SK-N-SH (cell line): ENCODE measurements at regions of chr5 and their contacts with region 1.

Region 1: DNA sequence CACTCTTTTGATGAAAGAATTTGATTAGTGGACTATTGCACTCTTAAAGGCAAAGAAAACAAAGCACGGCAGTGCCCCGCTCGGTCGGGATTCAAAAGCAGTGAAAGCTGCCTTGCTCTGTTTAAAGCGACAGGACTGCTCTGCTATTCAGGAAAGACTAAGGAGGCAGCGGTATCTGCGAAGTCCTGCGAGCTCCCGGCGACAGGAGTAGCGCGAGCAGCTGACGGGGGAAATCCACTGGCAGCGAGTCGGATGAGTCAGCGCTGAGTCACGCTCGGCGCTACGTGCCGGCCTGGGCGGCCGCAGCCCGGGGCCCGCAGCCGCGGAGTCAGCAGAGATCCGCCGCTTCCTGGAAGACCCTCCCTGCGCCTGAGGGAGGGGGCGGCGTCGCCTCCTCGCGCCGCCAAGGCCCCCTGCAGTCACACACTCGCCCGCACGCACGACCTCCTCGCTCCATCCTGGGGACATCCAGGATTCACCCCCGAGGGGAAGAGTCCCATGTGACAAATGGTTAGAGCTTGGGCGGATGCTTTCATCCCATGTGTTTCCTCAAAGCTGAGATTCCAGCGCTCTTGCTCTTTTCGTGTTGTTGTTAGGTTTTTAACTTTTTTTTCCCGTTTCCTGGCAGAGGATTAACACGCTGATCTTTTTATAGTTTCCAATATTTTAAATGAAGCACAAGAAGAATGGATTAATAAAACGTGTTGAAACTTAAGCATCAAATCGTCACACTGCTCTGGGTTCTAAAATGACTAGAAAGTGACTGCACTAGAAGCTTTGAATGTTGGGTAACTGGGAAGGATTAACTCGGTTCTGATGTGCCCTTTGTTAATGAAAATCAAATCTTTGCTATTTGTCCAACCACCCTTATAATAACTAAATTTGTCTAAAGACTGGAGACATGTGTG is 102.5 kb downstream of the ARRDC3 start:
- DNase-seq: peak; percentile 91
- H3K4me3 ChIP-seq: peak overlapping the region; percentile 50 to 58
- H3K27ac ChIP-seq: peak overlapping the region; percentile 94 to 98
- H3K4me1 ChIP-seq: peaks cover 10 to 24% of the 10 kb centered on the region in 2 experiments
- H3K27me3 ChIP-seq: no peaks in the 10 kb centered on the region
- CTCF ChIP-seq: 0 out of 2 replicates have a peak, but pooled peaks have one; percentile 9
- EP300 ChIP-seq: peak; percentile 56 to 82; a peak in 3 of 4 replicates
- RAD21 ChIP-seq: no peak; the same call in none of the 2 replicates

Region 2: GRCh38 chr5:90740244-90740799 is 540.3 kb before region 1 on chr5:
- CTCF ChIA-PET with region 1: no interaction called
- POLR2A ChIA-PET with region 1: no interaction called
- DNase-seq: no peak
- H3K4me3 ChIP-seq: no peak overlapping the region
- H3K27ac ChIP-seq: no peak overlapping the region
- H3K4me1 ChIP-seq: no peaks in the 10 kb centered on the region
- H3K27me3 ChIP-seq: no peaks in the 10 kb centered on the region
- CTCF ChIP-seq: no peak
- EP300 ChIP-seq: no peak
- RAD21 ChIP-seq: no peak

Region 3: DNA sequence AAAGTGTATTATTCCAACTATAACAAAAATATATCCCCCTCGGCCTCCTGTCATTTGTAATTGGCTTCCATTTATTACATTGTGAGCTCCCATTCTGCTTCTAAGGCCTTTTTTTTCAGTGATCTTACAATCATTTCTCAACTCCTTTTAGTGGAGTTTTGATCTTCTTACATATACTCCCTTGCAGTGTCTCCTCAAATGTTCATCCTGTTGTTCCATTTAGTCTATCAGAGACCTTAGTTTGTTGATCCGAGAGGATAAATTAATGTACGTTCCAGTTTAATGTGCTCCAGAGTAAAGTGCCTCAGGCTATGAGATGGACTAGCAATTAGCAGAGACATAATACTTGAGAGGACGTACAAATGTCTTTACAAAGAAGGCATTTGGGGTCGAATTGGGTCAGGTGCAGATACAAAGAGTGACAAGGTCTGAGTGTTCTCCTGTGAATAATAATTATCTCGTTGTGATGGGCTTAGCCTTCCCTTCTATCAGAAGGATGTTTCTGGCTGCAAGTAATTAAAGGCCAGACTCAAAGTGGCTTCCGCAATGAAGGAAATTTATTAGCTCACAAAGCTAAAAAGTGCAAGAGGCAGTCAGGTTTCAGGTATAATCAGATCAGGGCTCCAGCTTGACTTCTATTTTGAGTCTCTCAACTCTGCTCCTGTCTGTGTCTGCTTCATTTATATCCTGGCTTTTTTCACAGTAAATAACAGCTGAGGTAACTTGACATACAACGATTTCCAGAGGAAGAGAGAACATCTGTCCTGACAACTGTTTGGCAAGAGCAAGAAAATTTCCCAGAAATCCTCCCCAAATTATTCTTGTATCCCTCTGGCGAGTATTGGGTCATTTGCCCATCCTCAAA is 72.4 kb after region 1 on chr5:
- CTCF ChIA-PET with region 1: interaction called, 5 read pairs
- POLR2A ChIA-PET with region 1: interaction called, 19 read pairs
- DNase-seq: peak; percentile 50
- H3K4me3 ChIP-seq: no peak overlapping the region
- H3K27ac ChIP-seq: peak overlapping the region in 1 of 2 experiments; percentile 97; a peak in 2 of 4 replicates
- H3K4me1 ChIP-seq: peaks cover 0 to 29% of the 10 kb centered on the region in 2 experiments; a peak in 1 of 4 replicates
- H3K27me3 ChIP-seq: no peaks in the 10 kb centered on the region
- CTCF ChIP-seq: no peak
- EP300 ChIP-seq: peak in 1 of 2 experiments; percentile 96; a peak in 2 of 4 replicates
- RAD21 ChIP-seq: peak; percentile 0

Region 4: GRCh38 chr5:91591076-91591475 is 310.5 kb after region 1 on chr5:
- CTCF ChIA-PET with region 1: no interaction called
- POLR2A ChIA-PET with region 1: no interaction called
- DNase-seq: no peak
- H3K4me3 ChIP-seq: no peak overlapping the region
- H3K27ac ChIP-seq: no peak overlapping the region
- H3K4me1 ChIP-seq: no peaks in the 10 kb centered on the region
- H3K27me3 ChIP-seq: no peaks in the 10 kb centered on the region
- CTCF ChIP-seq: no peak
- EP300 ChIP-seq: no peak
- RAD21 ChIP-seq: no peak